ENCODE measurements at regions of chr12 and their contacts with region 1.

Region 1: GRCh38 chr12:503111-503761 is 43.5 kb downstream of the B4GALNT3 start:
- DNase-seq: peak; percentile 87
- H3K4me3 Mint-ChIP-seq: peak overlapping the region; percentile 69
- H3K27ac Mint-ChIP-seq: peak overlapping the region; percentile 87
- H3K4me1 Mint-ChIP-seq: peaks cover 40% of the 10 kb centered on the region
- H3K27me3 Mint-ChIP-seq: no peaks in the 10 kb centered on the region
- CTCF ChIP-seq: no peak

Region 2: DNA sequence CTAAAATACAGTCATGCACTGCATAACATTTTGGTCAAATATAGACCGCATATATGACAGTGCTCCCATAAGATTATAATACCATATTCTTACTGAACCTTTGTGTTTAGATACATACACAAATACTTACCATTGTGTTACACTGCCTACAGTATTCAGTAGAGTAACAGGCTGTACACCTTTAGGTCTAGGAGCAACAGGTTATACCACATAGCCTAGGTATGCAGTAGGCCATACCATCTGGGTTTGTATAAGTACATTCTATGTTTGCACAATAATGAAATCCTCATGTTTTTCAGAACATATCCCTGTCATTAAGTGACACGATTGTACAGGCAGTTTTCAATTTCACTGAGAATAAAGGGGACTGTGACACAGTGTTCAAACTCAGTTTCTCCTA is 136.4 kb before region 1 on chr12:
- CTCF ChIA-PET with region 1: no interaction called
- intact Hi-C with region 1: no loop called
- DNase-seq: no peak
- H3K4me3 Mint-ChIP-seq: no peak overlapping the region
- H3K27ac Mint-ChIP-seq: no peak overlapping the region
- H3K4me1 Mint-ChIP-seq: no peaks in the 10 kb centered on the region
- H3K27me3 Mint-ChIP-seq: no peaks in the 10 kb centered on the region
- CTCF ChIP-seq: no peak

Region 3: DNA sequence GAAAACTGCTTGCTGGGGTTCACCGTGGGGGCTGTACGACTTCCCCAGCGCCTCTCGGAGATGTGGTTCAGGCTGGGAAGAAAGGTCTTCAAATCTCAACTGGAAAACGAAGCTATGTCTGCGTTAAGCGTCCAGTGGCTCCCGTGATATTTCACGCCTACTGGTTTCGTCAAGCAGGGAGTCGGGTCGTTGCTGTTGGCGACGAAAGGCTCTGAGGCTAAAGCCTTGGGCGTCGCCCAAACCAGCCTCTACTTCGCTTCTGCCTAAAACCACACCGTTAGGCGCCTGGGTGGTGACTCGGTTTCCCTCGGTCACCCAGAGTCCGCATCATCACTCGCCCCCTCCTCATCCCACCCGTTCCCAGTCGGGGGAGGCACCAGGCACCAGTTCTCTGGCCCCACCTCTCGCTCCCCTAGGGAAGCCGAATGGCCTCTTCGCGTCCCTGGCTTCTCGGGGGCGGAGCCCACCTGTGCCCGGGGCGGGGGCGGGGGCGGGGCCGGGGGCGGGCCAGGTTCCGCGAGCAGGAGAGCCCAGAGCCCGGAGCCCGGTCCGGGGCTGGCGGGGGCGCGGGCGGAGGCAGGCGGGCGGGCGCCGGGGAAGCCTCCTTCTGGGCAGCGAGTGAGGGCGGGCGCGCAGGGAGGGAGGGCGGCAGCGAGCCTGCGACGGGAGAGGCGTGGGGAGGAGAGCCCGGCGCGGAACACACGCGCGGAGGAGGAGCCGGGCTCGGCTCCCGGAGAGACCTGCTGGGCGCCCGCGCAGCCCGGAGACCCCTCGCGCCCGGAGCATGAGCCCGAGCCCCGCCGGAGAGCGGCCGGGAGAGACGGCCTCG is 43.6 kb before region 1 on chr12 and contains the start of gene B4GALNT3:
- CTCF ChIA-PET with region 1: interaction called, 3 read pairs
- intact Hi-C with region 1: loop called (anchors 5 kb)
- DNase-seq: peak; percentile 61
- H3K4me3 Mint-ChIP-seq: peak within 1 kb of the TSS; percentile 67
- H3K27ac Mint-ChIP-seq: peak within 1 kb of the TSS; percentile 57
- H3K4me1 Mint-ChIP-seq: peaks cover 34% of the 10 kb centered on the region
- H3K27me3 Mint-ChIP-seq: peaks cover 70% of the 10 kb centered on the region
- CTCF ChIP-seq: no peak
- total RNA-seq, gene B4GALNT3: 15.9 and 19.3 TPM in 2 replicates

Region 4: GRCh38 chr12:484117-484516 is 19.1 kb before region 1 on chr12:
- CTCF ChIA-PET with region 1: interaction called, 13 read pairs
- intact Hi-C with region 1: no loop called
- DNase-seq: no peak
- H3K4me3 Mint-ChIP-seq: no peak overlapping the region
- H3K27ac Mint-ChIP-seq: no peak overlapping the region
- H3K4me1 Mint-ChIP-seq: peaks cover 30% of the 10 kb centered on the region
- H3K27me3 Mint-ChIP-seq: peaks cover 42% of the 10 kb centered on the region
- CTCF ChIP-seq: no peak

Region 5: GRCh38 chr12:538731-539539 is 35.7 kb after region 1 on chr12:
- CTCF ChIA-PET with region 1: interaction called, 37 read pairs
- intact Hi-C with region 1: loop called (anchors 5 kb)
- DNase-seq: peak; percentile 90
- H3K4me3 Mint-ChIP-seq: no peak overlapping the region
- H3K27ac Mint-ChIP-seq: peak overlapping the region; percentile 95
- H3K4me1 Mint-ChIP-seq: peaks cover 36% of the 10 kb centered on the region
- H3K27me3 Mint-ChIP-seq: peaks cover 2% of the 10 kb centered on the region
- CTCF ChIP-seq: no peak

Region 6: GRCh38 chr12:1185460-1186182 is 682.4 kb after region 1 on chr12:
- CTCF ChIA-PET with region 1: no interaction called
- intact Hi-C with region 1: no loop called
- DNase-seq: no peak
- H3K4me3 Mint-ChIP-seq: no peak overlapping the region
- H3K27ac Mint-ChIP-seq: no peak overlapping the region
- H3K4me1 Mint-ChIP-seq: no peaks in the 10 kb centered on the region
- H3K27me3 Mint-ChIP-seq: no peaks in the 10 kb centered on the region
- CTCF ChIP-seq: no peak